Panc1 (cell line): ENCODE measurements at regions of chr22 and their contacts with region 1.

Region 1: GRCh38 chr22:28442264-28442710 is 237.4 kb downstream of the TTC28 start:
- DNase-seq: no peak
- ATAC-seq: peak; percentile 94
- H3K4me3 ChIP-seq: peak overlapping the region; percentile 51 to 65
- H3K27ac ChIP-seq: peak overlapping the region; percentile 74
- H3K4me1 ChIP-seq: peaks cover 7% of the 10 kb centered on the region
- H3K27me3 ChIP-seq: no peaks in the 10 kb centered on the region
- CTCF ChIP-seq: peak; percentile 85

Region 2: GRCh38 chr22:28410050-28410816 is 32.1 kb before region 1 on chr22:
- CTCF ChIA-PET with region 1: no interaction called
- POLR2A ChIA-PET with region 1: no interaction called
- in situ Hi-C with region 1: no loop called
- intact Hi-C with region 1: no loop called
- DNase-seq: no peak
- ATAC-seq: no peak
- H3K4me3 ChIP-seq: no peak overlapping the region
- H3K27ac ChIP-seq: no peak overlapping the region
- H3K4me1 ChIP-seq: no peaks in the 10 kb centered on the region
- H3K27me3 ChIP-seq: no peaks in the 10 kb centered on the region
- CTCF ChIP-seq: no peak

Region 3: GRCh38 chr22:28582806-28583205 is 140.5 kb after region 1 on chr22:
- CTCF ChIA-PET with region 1: no interaction called
- POLR2A ChIA-PET with region 1: no interaction called
- in situ Hi-C with region 1: no loop called
- intact Hi-C with region 1: loop called (anchors 10 kb)
- DNase-seq: no peak
- ATAC-seq: no peak
- H3K4me3 ChIP-seq: no peak overlapping the region
- H3K27ac ChIP-seq: no peak overlapping the region
- H3K4me1 ChIP-seq: no peaks in the 10 kb centered on the region
- H3K27me3 ChIP-seq: no peaks in the 10 kb centered on the region
- CTCF ChIP-seq: no peak

Region 4: DNA sequence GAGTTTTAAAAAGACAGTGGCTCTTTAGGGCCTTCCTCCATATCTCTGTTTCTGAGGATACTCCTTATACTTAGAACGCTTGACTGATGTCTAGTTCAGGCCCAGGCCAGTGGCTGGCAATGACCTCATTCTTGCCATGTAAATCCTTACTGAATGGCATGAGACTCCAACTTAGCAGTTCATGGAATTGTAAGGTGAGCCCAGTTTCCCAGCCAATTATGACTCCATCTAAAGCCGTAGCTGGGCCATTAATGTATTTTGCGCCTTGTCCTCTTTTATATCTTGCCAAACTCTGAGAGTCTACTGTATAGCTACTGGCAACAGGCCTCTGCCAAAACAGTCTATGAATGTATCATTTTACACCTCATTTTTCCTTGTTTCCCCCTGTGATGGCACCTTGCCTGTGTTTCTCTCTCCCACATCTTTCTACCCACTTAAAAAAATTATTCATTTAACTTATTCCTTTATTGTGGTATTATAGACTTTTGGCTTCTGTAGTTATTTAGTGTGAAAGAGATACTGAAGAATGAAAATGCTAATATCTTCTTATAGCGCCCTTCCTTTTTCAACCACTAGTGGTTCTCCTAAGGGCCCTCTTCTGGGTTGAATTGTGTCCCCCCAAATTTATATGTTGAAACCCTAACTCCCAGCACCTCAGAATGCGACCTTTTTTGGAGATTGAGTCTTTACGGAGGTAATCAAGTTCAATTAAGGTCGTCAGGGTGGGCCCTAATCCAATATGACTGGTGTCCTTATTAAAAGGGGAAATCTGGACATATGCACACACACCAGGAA is 508.5 kb after region 1 on chr22:
- CTCF ChIA-PET with region 1: no interaction called
- POLR2A ChIA-PET with region 1: no interaction called
- in situ Hi-C with region 1: no loop called
- intact Hi-C with region 1: no loop called
- DNase-seq: no peak
- ATAC-seq: no peak
- H3K4me3 ChIP-seq: no peak overlapping the region
- H3K27ac ChIP-seq: no peak overlapping the region
- H3K4me1 ChIP-seq: no peaks in the 10 kb centered on the region
- H3K27me3 ChIP-seq: no peaks in the 10 kb centered on the region
- CTCF ChIP-seq: no peak; the same call in 1 of the 2 replicates